ENCODE measurements at regions of chr1 and their contacts with region 1.

Region 1: DNA sequence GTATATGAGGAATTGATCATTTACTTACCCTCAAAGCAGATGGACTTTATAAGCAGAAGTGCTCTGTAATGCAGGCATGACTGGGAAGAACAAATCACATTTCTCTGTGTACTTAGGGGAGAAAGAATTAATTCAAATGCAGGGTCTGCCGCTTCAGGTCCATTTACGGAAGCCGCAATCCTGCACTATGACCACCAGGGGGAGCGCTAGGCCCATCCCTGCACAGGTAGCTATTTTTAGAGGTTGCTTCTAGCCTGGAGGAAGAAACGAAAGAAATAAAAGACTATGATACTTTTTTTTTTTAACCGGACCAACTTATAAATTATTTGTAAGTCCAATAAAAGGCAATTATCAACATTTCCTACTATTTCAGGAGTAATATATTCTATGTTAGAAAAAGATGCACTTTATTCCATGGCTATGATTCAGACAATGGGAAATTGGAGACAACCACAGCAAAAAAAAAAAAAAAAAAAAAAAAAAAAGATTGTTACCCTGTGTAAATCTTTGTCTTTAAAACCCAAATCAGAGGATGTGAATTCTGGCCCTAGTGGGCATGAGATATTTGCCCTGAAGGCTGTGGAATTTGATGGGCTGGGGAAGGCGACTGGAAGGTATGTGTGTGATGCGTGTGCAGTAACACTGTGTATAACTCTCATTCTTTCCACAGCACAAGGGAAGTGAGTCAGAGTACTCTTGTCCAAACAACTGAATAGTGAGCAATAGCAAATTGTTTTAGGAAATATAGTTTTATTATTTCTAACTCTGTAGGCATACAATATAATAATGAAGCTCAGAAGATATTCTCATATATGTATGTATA is 12.9 kb upstream of the FYB2 start:
- DNase-seq: peak; percentile 26 to 82 (median 55)
- ATAC-seq: peak; percentile 53 to 65 (median 57)
- H3K4me3 ChIP-seq: no peak overlapping the region
- H3K4me3 Mint-ChIP-seq: no peak overlapping the region
- H3K27ac ChIP-seq: no peak overlapping the region
- H3K27ac Mint-ChIP-seq: no peak overlapping the region
- H3K4me1 ChIP-seq: no peaks in the 10 kb centered on the region
- H3K4me1 Mint-ChIP-seq: peaks cover 5 to 8% (median 5%) of the 10 kb centered on the region in 3 donors
- H3K27me3 ChIP-seq: peaks cover 0 to 4% of the 10 kb centered on the region in 2 experiments
- H3K27me3 Mint-ChIP-seq: peaks cover 10 to 29% of the 10 kb centered on the region in 2 donors

Region 2: GRCh38 chr1:56843544-56843943 is 11.5 kb after region 1 on chr1:
- CTCF ChIA-PET with region 1: interaction called, 4 to 11 read pairs
- POLR2A ChIA-PET with region 1: no interaction called
- DNase-seq: no peak
- ATAC-seq: no peak
- H3K4me3 ChIP-seq: no peak overlapping the region
- H3K4me3 Mint-ChIP-seq: no peak overlapping the region
- H3K27ac ChIP-seq: no peak overlapping the region
- H3K27ac Mint-ChIP-seq: no peak overlapping the region
- H3K4me1 ChIP-seq: no peaks in the 10 kb centered on the region
- H3K4me1 Mint-ChIP-seq: peaks cover 0 to 4% (median 0%) of the 10 kb centered on the region in 3 donors
- H3K27me3 ChIP-seq: peaks cover 0 to 5% of the 10 kb centered on the region in 2 experiments
- H3K27me3 Mint-ChIP-seq: peaks cover 6% of the 10 kb centered on the region in 2 donors

Measured in T-cell (primary cell).